HCT116 (cell line): ENCODE measurements at regions of chr16 and their contacts with region 1.

Region 1: DNA sequence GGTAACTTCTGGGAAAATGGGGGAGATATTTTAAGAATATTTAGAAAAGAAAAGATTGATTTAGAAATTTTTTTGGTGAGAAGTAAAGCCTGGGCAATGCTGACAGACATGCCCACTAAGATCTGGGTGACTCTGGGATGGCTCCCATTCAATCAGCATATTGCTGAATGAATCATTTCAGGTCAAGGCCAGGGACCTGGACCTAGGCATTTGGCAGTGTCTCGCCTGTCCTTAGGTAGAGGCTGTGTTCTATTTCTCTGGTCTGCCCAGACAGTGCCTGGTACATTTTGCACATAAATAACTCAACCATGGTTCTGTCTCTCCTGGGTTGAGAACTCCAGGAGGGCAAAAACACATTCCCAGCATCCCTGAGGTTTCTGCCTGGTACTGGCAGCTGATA is 39.9 kb downstream of the SMPD3 start:
- DNase-seq: no peak
- ATAC-seq: no peak
- H3K4me3 ChIP-seq: no peak overlapping the region
- H3K27ac ChIP-seq: no peak overlapping the region
- H3K4me1 ChIP-seq: no peaks in the 10 kb centered on the region
- H3K27me3 ChIP-seq: no peaks in the 10 kb centered on the region; the same call in 1 of the 2 replicates
- CTCF ChIP-seq: no peak
- POLR2A ChIP-seq: no peak
- RAD21 ChIP-seq: no peak

Region 2: GRCh38 chr16:68396481-68396880 is 11.9 kb before region 1 on chr16:
- CTCF ChIA-PET with region 1: interaction called, 10 read pairs
- POLR2A ChIA-PET with region 1: no interaction called
- RAD21 ChIA-PET with region 1: no interaction called
- intact Hi-C with region 1: no loop called
- DNase-seq: peak; percentile 44
- ATAC-seq: peak; percentile 84
- H3K4me3 ChIP-seq: no peak overlapping the region
- H3K27ac ChIP-seq: no peak overlapping the region
- H3K4me1 ChIP-seq: peaks cover 0 to 16% of the 10 kb centered on the region in 2 experiments; a peak in 2 of 4 replicates
- H3K27me3 ChIP-seq: no peaks in the 10 kb centered on the region
- CTCF ChIP-seq: peak; percentile 68 to 96 (median 73)
- POLR2A ChIP-seq: no peak
- RAD21 ChIP-seq: peak; percentile 73